Activated CD4-positive, alpha-beta T cell treated with anti-CD3 and anti-CD28 coated beads for 36 hours (primary cell): ENCODE measurements at regions of chr2 and their contacts with region 1.

Region 1: GRCh38 chr2:226423498-226423960 is 376.1 kb downstream of the IRS1 start:
- DNase-seq: peak; percentile 69
- ATAC-seq: peak; percentile 94
- H3K4me3 Mint-ChIP-seq: no peak overlapping the region
- H3K27ac Mint-ChIP-seq: no peak overlapping the region
- H3K4me1 Mint-ChIP-seq: peaks cover 12% of the 10 kb centered on the region
- H3K27me3 Mint-ChIP-seq: peaks cover 14% of the 10 kb centered on the region

Region 2: GRCh38 chr2:226649871-226650660 is 226.5 kb after region 1 on chr2:
- CTCF ChIA-PET with region 1: no interaction called
- POLR2A ChIA-PET with region 1: no interaction called
- intact Hi-C with region 1: loop called in 1 of 2 experiments (anchors 1 kb)
- DNase-seq: peak; percentile 65
- ATAC-seq: peak; percentile 97
- H3K4me3 Mint-ChIP-seq: no peak overlapping the region
- H3K27ac Mint-ChIP-seq: peak overlapping the region; percentile 43
- H3K4me1 Mint-ChIP-seq: peaks cover 20% of the 10 kb centered on the region
- H3K27me3 Mint-ChIP-seq: peaks cover 4% of the 10 kb centered on the region